Activated CD4-positive, alpha-beta T cell treated with anti-CD3 and anti-CD28 coated beads, Interleukin-2, amount 10 ng/mL, durations not matched to agents 24 days and 14 days (primary cell): ENCODE measurements at regions of chr1 and their contacts with region 1.

Region 1: DNA sequence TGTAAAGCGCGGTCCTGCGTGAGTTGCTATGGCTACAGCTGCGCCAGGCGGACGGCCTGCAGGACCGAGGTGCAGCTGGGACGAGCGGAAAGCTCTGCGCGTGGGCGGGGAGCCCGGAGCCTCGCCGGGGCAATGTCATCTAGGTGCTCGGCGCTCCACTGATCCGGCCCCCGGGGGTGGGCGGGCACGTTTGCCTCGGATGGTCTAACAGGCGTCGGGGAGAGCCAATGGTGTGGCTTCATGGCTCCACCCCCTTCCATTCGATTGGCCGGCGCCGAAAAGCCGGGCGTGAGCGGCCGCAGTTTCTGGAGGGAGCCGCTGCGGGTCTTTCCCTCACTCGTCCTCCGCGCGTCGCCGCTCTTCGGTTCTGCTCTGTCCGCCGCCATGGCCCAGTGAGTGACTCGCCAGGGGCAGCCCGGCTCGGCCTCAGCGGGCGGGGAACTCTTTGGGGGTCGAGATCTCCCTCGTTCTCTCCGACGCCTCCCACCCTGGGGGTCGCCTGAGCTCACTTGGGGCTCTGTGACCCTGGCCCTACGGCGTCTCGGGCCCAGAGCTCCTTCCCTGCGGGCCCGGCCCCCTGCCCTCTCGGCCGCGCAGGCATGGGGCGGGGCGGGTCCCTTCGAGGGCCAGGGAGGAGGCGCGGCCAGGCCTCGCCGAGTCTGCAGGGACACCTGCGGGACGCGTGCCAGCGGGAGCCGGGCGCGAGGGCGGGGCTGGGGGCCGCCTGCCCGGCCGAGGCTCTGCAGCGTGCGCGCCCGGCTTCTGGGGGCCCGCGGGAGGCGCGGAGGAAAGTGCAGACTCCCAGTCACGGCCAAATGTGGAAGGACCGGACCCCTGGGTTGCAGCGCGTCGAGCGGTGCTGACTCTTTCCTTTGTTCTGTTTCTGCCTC is at the start of gene PGD:
- DNase-seq: peak; percentile 99
- H3K4me3 Mint-ChIP-seq: peak within 1 kb of the TSS; percentile 93
- H3K27ac Mint-ChIP-seq: peak within 1 kb of the TSS; percentile 84
- H3K4me1 Mint-ChIP-seq: peaks cover 22% of the 10 kb centered on the region
- H3K27me3 Mint-ChIP-seq: no peaks in the 10 kb centered on the region
- total RNA-seq, gene PGD: 142 and 144 TPM in 2 replicates

Region 2: DNA sequence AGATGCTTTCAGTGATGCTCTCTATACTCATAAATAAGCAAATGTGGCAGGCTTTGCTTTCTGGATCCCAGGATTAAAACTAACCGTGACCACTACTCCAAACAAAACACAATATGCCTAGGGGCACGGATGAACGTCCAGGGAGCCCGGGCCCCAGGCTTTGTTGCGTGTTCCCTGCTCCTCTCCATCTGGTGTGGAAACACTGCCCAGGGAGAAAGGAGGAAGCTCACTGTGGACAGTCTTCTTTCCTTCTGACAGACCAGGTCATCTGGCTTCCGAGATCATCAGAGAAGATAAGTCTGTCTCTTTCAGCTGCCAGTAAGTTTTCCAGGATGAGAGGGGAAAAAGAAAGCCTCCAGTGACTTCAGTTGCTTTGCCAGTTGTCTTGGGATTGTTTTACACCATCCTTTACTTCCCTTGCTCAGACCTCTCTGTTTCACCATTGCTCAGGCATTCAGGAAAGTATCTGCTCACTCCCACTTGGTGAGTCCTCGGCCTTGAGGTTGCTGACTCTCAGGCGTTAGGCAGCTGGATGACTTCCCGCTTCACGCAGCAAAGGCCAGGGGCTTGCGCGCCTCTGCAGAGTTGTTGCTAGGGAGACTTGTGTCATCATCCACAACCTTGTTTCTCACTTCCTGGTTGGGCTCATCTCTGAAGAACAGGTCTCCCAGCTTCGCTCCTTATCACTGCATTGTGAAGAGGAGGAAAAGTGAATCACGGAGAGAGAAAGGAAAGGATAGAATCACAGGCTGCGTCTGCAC is 20.7 kb before region 1 on chr1:
- intact Hi-C with region 1: no loop called
- DNase-seq: no peak
- H3K4me3 Mint-ChIP-seq: no peak overlapping the region
- H3K27ac Mint-ChIP-seq: no peak overlapping the region
- H3K4me1 Mint-ChIP-seq: no peaks in the 10 kb centered on the region
- H3K27me3 Mint-ChIP-seq: no peaks in the 10 kb centered on the region

Region 3: GRCh38 chr1:10415211-10415930 is 16.4 kb after region 1 on chr1:
- intact Hi-C with region 1: loop called (anchors 2 kb)
- DNase-seq: peak; percentile 71
- H3K4me3 Mint-ChIP-seq: peak overlapping the region; percentile 59
- H3K27ac Mint-ChIP-seq: peak overlapping the region; percentile 90
- H3K4me1 Mint-ChIP-seq: peaks cover 6% of the 10 kb centered on the region
- H3K27me3 Mint-ChIP-seq: no peaks in the 10 kb centered on the region

Region 4: DNA sequence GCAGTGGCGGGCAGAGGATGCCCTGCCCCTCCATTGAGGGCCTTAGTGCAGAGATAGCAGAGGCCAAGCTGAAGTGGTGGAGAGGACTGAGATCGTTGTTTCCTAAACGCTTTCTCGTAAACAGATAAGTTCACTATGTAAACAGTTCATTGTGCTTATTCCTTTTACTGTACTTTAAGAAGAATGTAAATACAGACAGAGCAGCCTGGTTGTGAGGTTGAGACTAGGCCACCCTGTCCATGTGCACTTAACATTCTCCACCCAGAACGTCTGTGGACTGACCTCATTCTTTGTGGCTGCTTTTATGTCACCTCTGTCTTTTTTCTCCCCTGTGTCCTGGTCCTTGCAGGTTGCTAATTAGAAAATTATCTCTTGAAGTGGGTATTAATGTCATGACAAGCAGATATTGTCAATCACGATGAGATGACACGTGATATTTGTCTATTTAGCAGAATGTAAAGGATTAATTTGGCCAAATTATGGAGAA is 39.7 kb after region 1 on chr1:
- intact Hi-C with region 1: no loop called
- DNase-seq: no peak
- H3K4me3 Mint-ChIP-seq: no peak overlapping the region
- H3K27ac Mint-ChIP-seq: no peak overlapping the region
- H3K4me1 Mint-ChIP-seq: no peaks in the 10 kb centered on the region
- H3K27me3 Mint-ChIP-seq: no peaks in the 10 kb centered on the region

Region 5: DNA sequence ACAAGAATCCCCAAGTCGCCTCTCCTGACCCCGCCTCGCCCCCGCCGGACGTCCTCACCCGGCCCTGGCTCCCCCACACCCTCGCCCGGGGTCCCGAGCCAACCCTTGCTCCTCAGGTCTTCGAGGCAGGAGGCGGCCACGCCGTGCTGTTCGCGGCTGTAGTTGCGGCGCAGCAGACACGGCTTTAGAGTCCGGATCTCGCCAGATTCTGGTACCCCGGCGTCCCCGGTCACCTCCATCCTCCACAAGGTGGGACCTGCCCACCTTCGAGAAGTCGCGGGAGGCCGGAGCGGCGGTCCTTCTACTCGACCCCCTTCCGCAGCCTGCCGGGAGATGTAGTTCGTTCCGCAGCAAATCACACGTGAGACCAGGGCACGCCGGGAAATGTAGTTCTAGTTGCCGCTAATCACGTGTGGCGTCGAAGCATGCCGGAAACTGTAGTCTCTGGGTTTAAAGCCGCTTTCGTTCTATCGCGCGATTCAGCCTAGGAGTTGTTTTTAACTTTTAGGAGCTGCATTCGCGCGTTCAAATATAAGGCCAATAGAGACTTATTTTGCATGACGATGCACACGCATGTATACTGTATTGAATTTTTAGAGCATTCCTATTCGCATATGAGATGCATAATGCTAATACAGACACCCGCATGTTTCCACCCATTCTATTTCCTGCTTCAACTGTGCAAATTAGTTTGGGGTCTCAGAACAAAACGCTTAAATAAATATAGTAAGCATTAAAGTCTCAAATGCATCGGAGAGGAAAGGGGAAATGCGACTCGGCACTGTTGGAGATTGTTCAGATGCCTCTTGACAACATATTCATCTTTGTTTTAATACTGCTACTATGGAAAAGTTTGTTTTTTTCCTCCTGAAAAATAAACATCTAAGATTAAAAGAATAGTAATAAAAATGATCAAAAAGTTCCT is 73.5 kb after region 1 on chr1 and contains the start of gene DFFA:
- intact Hi-C with region 1: loop called (anchors 2 kb)
- DNase-seq: peak; percentile 98
- H3K4me3 Mint-ChIP-seq: peak within 1 kb of the TSS; percentile 98
- H3K27ac Mint-ChIP-seq: peak within 1 kb of the TSS; percentile 94
- H3K4me1 Mint-ChIP-seq: peaks cover 30% of the 10 kb centered on the region
- H3K27me3 Mint-ChIP-seq: no peaks in the 10 kb centered on the region
- total RNA-seq, gene DFFA: 57.4 and 58.2 TPM in 2 replicates

Region 6: DNA sequence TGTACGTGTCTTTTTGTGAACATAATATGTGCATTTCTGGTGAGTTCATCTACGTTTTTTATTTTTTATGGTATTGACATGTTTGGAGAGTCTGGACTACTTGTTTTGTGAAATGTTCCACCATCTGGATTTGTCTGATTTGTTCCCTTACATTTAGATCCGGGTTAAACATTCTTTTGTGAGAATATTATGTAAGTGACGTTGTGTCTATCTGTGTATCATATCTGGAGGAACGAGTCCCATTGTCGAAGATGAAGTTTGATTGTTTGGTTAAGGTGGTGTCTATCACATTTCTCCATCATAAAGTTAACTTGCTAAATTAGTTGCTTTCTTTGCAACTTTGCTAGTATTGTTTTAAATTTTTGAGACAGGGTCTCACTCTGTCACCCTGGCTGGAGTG is 83.8 kb after region 1 on chr1:
- intact Hi-C with region 1: no loop called
- DNase-seq: no peak
- H3K4me3 Mint-ChIP-seq: no peak overlapping the region
- H3K27ac Mint-ChIP-seq: no peak overlapping the region
- H3K4me1 Mint-ChIP-seq: peaks cover 6% of the 10 kb centered on the region
- H3K27me3 Mint-ChIP-seq: no peaks in the 10 kb centered on the region